Dendritic cell treated with granulocyte-macrophage colony-stimulating factor and Interleukin-4, amounts not matched to agents 40 ng/mL and 50 ng/mL, for 4 days (primary cell): ENCODE measurements at regions of chr10 and their contacts with region 1.

Region 1: GRCh38 chr10:12042797-12043651 is at the start of gene UPF2:
- H3K4me3 Mint-ChIP-seq: peak within 1 kb of the TSS; percentile 83
- H3K27ac Mint-ChIP-seq: peak within 1 kb of the TSS; percentile 100
- H3K4me1 Mint-ChIP-seq: peaks cover 30% of the 10 kb centered on the region
- H3K27me3 Mint-ChIP-seq: no peaks in the 10 kb centered on the region

Region 2: DNA sequence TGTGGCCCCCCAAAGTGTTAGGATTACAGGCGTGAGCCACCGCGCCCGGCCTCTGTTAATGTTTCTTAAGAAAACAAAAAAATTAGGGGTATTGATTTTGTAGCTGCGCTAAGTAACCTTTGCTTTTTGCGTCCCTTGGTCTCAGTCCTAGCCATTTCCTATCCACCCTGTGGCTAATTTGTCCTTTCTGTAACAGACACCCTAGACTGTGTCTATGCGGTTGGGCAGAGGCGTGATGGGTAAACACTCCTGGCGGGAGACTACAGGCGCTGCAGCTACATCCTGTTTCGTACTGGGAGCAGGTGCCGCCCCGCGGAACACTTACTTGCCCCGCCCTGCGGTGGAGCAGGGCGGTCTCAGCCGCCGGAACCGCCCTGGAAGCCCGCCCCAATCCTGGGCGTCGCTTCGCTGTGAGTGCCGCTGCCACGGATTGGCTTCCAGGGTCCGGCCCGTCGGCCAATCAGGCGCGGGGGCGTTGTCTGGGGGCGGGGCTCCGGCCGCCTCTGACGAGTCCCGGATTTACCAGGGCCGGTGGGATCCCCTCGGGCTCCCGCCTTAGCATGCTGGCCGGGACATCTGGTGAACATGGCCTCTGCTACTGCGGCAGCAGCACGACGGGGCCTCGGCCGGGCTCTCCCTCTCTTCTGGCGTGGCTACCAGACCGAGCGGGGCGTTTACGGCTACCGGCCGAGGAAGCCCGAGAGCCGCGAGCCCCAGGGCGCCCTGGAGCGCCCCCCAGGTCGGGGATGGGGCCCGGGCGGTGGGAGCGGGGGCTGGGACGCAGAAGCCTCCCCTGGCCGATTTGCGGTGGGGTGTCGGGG is 25.6 kb after region 1 on chr10 and contains the start of gene DHTKD1:
- intact Hi-C with region 1: loop called (anchors 1 kb)
- H3K4me3 Mint-ChIP-seq: peak within 1 kb of the TSS; percentile 74
- H3K27ac Mint-ChIP-seq: peak within 1 kb of the TSS; percentile 82
- H3K4me1 Mint-ChIP-seq: peaks cover 19% of the 10 kb centered on the region
- H3K27me3 Mint-ChIP-seq: no peaks in the 10 kb centered on the region

Region 3: GRCh38 chr10:12077580-12078180 is 34.7 kb after region 1 on chr10:
- intact Hi-C with region 1: loop called (anchors 5 kb)
- H3K4me3 Mint-ChIP-seq: no peak overlapping the region
- H3K27ac Mint-ChIP-seq: peak overlapping the region; percentile 62
- H3K4me1 Mint-ChIP-seq: peaks cover 26% of the 10 kb centered on the region
- H3K27me3 Mint-ChIP-seq: no peaks in the 10 kb centered on the region

Region 4: DNA sequence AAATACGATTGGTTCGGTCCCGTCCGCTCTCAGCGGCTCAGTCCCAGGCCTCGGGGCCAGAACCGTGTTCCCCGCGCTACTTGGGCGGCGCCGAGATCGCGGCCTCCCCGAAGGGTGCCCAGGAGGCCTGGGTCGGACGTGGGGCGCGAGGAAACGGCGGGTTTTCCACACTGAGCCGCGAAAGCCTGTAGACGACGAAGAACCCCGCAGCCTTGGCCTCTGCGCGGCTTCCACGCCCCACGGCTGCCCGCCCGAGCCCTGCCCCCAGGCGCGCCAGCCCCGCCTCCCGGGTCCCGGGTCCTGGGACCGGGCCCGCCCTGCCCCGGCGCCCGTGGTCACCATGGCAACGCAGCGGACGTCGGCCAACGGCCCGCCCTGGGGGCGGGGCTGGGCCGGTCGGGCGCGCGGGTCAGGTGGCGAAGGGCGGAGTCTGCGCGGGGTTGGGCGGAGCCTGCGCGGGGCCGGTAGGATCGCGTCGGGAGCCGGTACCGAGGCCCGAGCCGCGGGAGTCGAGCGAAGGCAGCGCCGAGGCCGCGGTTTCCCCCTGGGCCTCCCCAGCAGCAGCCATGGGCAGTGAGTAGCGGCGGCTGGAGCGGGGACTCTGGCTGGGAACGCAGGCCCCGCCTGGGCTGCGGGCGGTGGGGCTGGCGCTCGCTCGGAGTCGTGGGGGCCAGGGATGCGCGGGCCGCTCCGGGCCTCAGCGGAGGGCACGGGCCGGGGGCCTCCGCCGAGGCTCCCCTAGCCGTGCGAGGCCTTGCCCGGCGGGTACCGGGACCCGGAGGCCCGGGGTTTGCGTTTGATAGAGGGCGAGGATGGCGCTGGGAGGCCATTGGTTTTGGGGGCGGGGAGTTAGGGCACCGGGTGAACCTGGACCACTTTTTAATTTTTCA is 86.4 kb after region 1 on chr10 and contains the start of gene SEC61A2:
- intact Hi-C with region 1: loop called (anchors 1 kb)
- H3K4me3 Mint-ChIP-seq: peak within 1 kb of the TSS; percentile 84
- H3K27ac Mint-ChIP-seq: peak within 1 kb of the TSS; percentile 92
- H3K4me1 Mint-ChIP-seq: peaks cover 24% of the 10 kb centered on the region
- H3K27me3 Mint-ChIP-seq: peaks cover 4% of the 10 kb centered on the region